H1 (cell line): ENCODE measurements at regions of chr22 and their contacts with region 1.

Region 1: DNA sequence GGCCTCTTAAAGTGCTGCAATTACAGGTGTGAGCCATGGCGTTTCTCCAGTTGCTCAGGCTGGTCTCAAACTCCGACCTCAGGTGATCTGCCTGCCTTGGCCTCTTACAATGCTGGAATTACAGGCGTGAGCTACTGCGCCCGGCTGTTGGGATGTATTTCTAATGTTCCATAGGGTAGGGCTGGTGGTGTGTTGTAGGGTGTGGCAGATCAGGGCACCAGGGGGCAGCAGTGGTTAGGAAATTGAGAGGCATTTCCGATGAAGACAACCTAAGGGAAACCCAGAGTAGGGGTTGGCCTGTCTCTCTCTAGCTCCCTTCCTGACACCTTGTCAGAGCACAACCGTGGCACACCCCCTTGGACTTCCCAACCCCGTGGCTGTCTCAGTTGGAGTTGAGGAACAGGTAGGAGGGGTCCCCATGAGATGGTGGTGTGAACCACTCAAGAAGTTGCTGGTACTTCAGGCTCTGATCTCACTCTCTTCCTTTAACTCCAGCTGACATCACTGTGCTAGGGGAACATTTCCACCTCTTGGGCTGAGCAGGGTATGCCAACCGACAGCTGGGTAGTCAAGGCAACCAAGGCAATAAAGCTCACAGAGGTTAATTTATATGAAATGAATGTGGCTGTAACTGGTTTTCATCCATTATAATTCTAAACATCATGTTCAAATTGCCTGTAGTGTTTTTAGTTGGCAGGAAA is 33.0 kb downstream of the YWHAH start:
- DNase-seq: peak; percentile 72 to 96
- H3K4me3 ChIP-seq: no peak overlapping the region
- H3K27ac ChIP-seq: no peak overlapping the region
- H3K4me1 ChIP-seq: no peaks in the 10 kb centered on the region; a peak in 1 of 7 replicates
- H3K27me3 ChIP-seq: no peaks in the 10 kb centered on the region
- CTCF ChIP-seq: peak; percentile 76 to 94 (median 90)
- EP300 ChIP-seq: no peak
- POLR2A ChIP-seq: no peak
- RAD21 ChIP-seq: peak; percentile 98

Region 2: DNA sequence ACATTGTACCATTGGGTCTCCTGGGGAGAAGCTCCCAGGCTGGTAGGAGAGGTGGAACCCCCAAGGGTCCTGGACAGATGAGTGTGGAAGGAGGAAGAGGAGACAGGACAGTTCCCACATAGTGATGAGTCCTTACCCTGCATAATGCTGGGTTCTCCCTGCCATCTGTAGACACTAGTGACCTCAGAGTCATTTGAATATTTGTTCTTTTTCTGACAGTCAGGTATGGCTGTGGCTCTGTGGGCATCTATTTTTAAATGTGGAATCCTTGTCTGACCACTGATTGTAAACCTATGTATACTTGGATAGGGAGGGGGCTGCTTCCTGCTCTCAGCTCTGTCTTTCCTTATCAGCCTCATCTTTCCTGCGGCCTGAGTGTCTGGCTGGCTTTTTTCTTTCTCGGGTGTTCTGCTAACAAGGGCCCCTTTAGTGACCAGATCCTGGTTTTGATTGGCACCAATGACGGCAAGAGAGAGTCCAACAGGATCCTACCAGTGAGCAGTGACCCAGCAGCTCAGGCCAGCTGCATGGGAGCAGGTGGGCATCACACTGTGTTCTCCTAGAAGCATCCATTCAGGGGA is 63.1 kb after region 1 on chr22:
- CTCF ChIA-PET with region 1: interaction called, 14 read pairs
- POLR2A ChIA-PET with region 1: no interaction called
- DNase-seq: no peak
- H3K4me3 ChIP-seq: no peak overlapping the region
- H3K27ac ChIP-seq: no peak overlapping the region
- H3K4me1 ChIP-seq: no peaks in the 10 kb centered on the region; a peak in 2 of 7 replicates
- H3K27me3 ChIP-seq: no peaks in the 10 kb centered on the region; a peak in 3 of 7 replicates
- CTCF ChIP-seq: no peak
- EP300 ChIP-seq: no peak
- POLR2A ChIP-seq: no peak
- RAD21 ChIP-seq: no peak

Region 3: DNA sequence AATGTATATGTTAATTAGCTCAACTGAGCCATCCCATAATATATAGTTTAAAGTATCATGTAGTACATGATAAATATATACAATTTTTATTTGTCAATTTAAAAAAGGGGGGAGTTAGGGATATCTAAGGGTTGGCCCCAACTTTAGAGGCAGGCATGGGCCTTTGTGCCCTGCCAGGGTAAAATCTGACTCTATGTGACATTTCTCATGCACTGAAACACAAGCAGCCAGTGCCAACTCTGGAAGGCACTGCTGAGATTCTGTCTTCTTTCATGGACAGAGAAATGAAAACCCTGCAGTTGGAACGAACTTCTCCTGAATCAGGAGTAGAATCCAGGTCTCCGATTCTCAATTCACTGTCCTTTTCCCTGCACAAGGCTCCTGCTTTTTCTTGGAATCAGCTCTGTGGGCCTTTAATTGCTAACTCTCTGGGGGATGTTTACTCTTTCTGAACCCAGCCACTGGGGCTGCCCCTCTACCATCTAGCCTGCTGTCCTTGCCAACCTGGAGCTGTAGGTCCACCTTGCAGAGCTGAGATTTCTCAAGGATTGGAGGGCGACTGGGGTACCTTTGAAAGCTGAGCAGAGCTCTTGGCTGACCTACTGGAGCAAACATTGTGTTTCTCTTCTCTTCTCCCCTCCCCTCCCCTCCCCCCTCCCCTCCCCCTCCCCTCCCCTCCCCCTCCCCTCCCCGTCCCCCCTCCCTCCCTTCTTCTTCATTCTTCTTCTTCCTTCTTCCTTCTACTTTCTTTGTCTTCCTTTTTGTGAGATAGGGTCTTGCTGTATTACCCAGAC is 92.5 kb after region 1 on chr22:
- CTCF ChIA-PET with region 1: interaction called, 18 read pairs
- POLR2A ChIA-PET with region 1: no interaction called
- DNase-seq: no peak
- H3K4me3 ChIP-seq: no peak overlapping the region
- H3K27ac ChIP-seq: no peak overlapping the region
- H3K4me1 ChIP-seq: no peaks in the 10 kb centered on the region
- H3K27me3 ChIP-seq: no peaks in the 10 kb centered on the region
- CTCF ChIP-seq: no peak
- EP300 ChIP-seq: no peak
- POLR2A ChIP-seq: no peak
- RAD21 ChIP-seq: no peak

Region 4: DNA sequence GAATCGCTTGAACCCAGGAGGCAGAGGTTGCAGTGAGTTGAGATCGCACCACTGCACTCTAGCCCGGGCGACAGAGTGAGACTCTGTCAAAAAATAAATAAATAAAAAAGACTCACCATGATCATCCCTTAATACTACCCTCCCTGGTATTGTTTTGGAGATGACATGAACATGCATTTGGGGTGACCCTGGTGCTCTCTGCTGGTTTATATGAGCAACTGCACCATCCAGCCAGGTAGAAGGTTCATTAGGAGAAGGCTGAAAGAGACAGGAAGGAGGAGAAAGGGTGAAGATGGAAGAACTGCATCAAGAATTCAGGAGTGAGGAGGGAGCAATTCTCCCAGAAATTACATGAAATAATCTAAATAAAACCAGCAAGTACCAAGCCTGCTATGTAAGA is 103.6 kb after region 1 on chr22:
- CTCF ChIA-PET with region 1: interaction called, 243 read pairs
- POLR2A ChIA-PET with region 1: interaction called, 5 read pairs
- DNase-seq: no peak
- H3K4me3 ChIP-seq: no peak overlapping the region
- H3K27ac ChIP-seq: no peak overlapping the region
- H3K4me1 ChIP-seq: no peaks in the 10 kb centered on the region
- H3K27me3 ChIP-seq: peaks cover 0 to 4% (median 0%) of the 10 kb centered on the region in 4 experiments; a peak in 1 of 7 replicates
- CTCF ChIP-seq: peak; percentile 14 to 80 (median 79)
- EP300 ChIP-seq: no peak
- POLR2A ChIP-seq: no peak
- RAD21 ChIP-seq: peak; percentile 89 to 91